ENCODE measurements at regions of chr13 and their contacts with region 1.

Region 1: DNA sequence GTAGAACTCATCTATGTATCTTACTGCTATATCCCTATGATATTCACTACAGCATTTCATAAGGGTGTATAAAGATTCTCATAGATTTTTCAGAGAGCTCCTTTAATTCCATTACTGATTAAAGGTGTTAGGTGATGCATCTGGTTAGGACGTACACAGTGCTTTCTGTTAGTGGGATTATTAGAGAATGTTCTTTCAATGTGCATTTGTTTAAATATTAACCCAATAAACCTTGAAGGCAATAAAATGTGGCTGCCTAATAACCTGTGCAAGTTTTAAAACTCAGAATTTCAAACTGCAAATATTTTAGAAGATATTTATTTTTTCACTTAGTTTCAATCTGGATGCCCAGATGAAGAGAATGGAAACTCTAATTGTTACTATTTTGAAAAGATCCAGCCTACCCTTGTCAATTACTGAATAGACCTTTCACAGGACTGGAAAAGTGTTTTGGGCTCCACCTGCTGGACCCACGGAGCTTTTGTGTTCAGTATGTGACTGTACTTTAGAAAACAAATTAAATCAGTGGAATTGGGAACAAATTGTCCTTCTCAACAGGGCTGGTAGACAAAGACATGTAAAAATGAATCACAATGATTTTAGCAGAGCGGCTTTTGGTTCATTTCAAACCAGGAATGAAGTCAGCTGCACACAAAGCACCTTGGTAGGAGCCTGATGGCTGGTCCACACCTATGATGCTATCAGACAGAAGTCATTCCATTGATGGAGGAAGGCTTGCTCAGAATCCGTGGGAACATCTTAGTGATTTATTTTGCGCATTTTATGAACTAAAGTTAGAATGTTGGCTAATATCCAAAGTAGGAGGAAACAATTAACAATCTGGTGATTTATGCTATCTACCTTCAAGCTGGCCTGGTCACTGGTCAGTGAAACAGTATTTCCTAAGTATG is 89.4 kb upstream of the RAP2A start:
- DNase-seq: peak; percentile 70
- H3K4me3 Mint-ChIP-seq: no peak overlapping the region
- H3K27ac Mint-ChIP-seq: no peak overlapping the region
- H3K4me1 Mint-ChIP-seq: peaks cover 5% of the 10 kb centered on the region
- H3K27me3 Mint-ChIP-seq: no peaks in the 10 kb centered on the region

Region 2: GRCh38 chr13:97359181-97360057 is 14.9 kb after region 1 on chr13:
- CTCF ChIA-PET with region 1: interaction called, 15 read pairs
- DNase-seq: peak; percentile 56
- H3K4me3 Mint-ChIP-seq: no peak overlapping the region
- H3K27ac Mint-ChIP-seq: no peak overlapping the region
- H3K4me1 Mint-ChIP-seq: no peaks in the 10 kb centered on the region
- H3K27me3 Mint-ChIP-seq: no peaks in the 10 kb centered on the region

Measured in activated naive CD4-positive, alpha-beta T cell treated with anti-CD3 and anti-CD28 coated beads, Interleukin-2, amount 10 ng/mL, durations not matched to agents 7 days and 5 days (primary cell).